ENCODE measurements at regions of chrX and their contacts with region 1.

Region 1: DNA sequence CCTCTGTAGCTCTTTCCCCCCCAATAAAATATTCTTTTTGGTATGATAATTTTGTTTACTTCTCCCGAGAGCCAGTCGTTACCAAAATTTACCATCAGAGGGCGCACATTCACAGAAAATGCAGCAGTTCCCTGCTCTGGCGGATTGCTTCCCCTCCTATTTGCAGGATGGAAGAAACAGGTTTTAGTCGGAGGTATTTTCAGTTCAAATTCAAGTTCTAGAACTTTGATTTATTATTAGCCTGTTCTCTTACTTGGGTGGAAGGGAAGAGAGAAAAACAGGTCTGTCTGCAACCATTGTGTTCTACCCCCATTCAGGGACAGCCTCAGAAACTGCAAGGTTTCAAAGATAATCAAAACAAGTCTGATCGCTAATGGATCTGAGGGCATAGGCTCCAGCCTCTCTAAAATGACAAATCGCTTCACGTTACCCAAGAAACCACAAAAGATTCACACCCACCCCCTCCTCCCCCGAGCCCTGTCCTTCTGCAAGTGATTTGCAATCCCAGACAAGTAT is 263.8 kb upstream of the RPS6KA3 start:
- DNase-seq: no peak
- ATAC-seq: peak in 2 of 4 donors; percentile 49 to 77
- H3K4me3 ChIP-seq: peak overlapping the region; percentile 42
- H3K27ac ChIP-seq: no peak overlapping the region
- H3K4me1 ChIP-seq: no peaks in the 10 kb centered on the region
- H3K27me3 ChIP-seq: peaks cover 0 to 39% (median 0%) of the 10 kb centered on the region in 3 donors
- CTCF ChIP-seq: peak; percentile 80

Region 2: DNA sequence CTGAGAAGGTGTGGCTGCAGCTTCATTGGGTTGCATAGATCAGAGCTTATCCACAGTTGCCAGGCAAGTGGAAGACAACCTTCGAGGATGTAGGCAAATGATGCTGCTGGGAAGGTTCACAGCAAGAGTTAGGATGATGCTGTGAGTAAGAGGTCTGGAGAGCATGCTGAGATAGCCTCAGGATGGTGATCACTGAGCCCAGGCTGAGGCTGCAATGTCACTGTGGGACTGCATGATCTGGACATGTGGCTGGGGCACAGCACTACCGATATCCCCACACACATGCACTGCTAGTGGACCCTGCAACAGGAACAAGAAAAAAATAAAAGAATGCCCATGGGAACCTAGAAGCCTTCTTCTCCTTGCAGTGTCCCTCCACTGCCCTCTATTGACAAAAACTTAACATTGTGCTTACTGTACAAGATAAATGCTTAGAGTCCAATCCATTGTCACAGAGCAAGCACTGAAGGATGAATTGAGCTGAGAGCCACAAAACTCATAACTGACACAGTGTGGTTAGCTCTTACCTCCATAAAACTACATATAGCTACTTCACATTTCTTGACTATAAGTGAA is 949.3 kb after region 1 on chrX:
- intact Hi-C with region 1: loop called in 1 of 2 experiments (anchors 5 kb)
- DNase-seq: no peak
- ATAC-seq: peak in 2 of 4 donors; percentile 57 to 60
- H3K4me3 ChIP-seq: no peak overlapping the region
- H3K27ac ChIP-seq: no peak overlapping the region
- H3K4me1 ChIP-seq: no peaks in the 10 kb centered on the region
- H3K27me3 ChIP-seq: peaks cover 0 to 4% (median 0%) of the 10 kb centered on the region in 3 donors
- CTCF ChIP-seq: peak; percentile 55

Region 3: GRCh38 chrX:21745756-21746155 is 1215.3 kb after region 1 on chrX:
- intact Hi-C with region 1: loop called in 1 of 2 experiments (anchors 10 kb)
- DNase-seq: peak in 1 of 2 donors; percentile 53
- ATAC-seq: peak in 1 of 4 donors; percentile 44
- H3K4me3 ChIP-seq: no peak overlapping the region
- H3K27ac ChIP-seq: peak overlapping the region; percentile 69
- H3K4me1 ChIP-seq: peaks cover 29% of the 10 kb centered on the region
- H3K27me3 ChIP-seq: peaks cover 0 to 5% (median 0%) of the 10 kb centered on the region in 3 donors
- CTCF ChIP-seq: peak; percentile 53